ENCODE measurements at regions of chr17 and their contacts with region 1.

Region 1: DNA sequence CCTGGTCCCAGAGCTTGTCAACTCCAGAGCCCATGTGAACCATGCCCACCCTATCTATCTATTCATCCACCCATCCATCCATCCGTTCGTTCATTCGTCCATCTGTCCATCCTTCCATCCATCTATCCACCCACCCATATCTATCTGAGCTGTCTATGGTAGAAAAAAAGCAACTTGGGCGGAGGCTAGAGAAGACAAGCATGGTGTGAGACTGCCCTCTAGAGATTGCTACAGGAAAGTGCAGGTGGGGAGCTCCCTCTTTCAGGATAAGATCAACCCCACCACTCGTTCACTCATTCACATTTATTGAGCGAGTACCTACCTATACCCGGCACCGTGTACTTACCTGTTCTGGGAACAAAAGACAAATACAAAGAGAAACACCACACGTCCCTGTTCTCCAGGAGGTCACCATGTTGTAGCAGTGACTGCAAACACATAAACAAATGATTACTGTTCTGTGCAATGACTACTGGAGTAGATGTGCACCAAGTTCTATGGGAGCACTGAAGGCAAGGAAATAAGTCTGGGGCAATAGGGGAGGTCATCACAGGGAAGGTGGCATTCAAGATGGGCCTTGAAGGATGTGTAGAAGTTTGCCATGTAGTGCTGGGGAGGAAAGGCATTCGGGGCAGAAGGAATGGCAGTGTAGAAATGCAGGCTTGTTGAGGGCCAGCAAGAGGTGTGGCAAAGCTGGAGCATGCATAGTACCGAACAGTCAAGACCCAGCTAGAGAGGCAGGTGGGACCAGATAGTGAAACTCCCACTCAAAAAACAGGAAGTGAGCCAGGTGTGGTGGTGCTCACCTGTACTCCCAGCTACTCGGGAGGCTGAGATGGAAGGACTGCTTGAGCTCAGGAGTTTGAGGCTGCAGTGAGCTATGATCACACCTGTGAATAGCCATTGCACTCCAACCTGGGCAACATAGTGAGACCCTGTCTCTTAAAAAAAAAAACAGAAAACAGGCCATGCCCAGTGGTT is 13.4 kb upstream of the ATP5MC1 start:
- DNase-seq: peak; percentile 86 to 90
- H3K4me3 ChIP-seq: no peak overlapping the region
- H3K4me3 Mint-ChIP-seq: no peak overlapping the region
- H3K27ac Mint-ChIP-seq: no peak overlapping the region
- H3K4me1 ChIP-seq: peaks cover 11% of the 10 kb centered on the region
- H3K4me1 Mint-ChIP-seq: peaks cover 12% of the 10 kb centered on the region
- H3K27me3 ChIP-seq: no peaks in the 10 kb centered on the region
- H3K27me3 Mint-ChIP-seq: no peaks in the 10 kb centered on the region
- CTCF ChIP-seq: peak; percentile 100

Region 2: GRCh38 chr17:48678141-48678971 is 200.9 kb before region 1 on chr17:
- CTCF ChIA-PET with region 1: interaction called, 73 read pairs
- POLR2A ChIA-PET with region 1: no interaction called
- intact Hi-C with region 1: loop called (anchors 1 kb)
- DNase-seq: peak; percentile 69 to 87
- H3K4me3 ChIP-seq: no peak overlapping the region
- H3K4me3 Mint-ChIP-seq: no peak overlapping the region
- H3K27ac Mint-ChIP-seq: no peak overlapping the region
- H3K4me1 ChIP-seq: no peaks in the 10 kb centered on the region
- H3K4me1 Mint-ChIP-seq: no peaks in the 10 kb centered on the region
- H3K27me3 ChIP-seq: no peaks in the 10 kb centered on the region
- H3K27me3 Mint-ChIP-seq: peaks cover 8% of the 10 kb centered on the region
- CTCF ChIP-seq: peak; percentile 99

Region 3: GRCh38 chr17:48767263-48767774 is 111.9 kb before region 1 on chr17:
- CTCF ChIA-PET with region 1: interaction called, 18 read pairs
- POLR2A ChIA-PET with region 1: no interaction called
- intact Hi-C with region 1: no loop called
- DNase-seq: peak in 1 of 2 experiments; percentile 34
- H3K4me3 ChIP-seq: no peak overlapping the region
- H3K4me3 Mint-ChIP-seq: no peak overlapping the region
- H3K27ac Mint-ChIP-seq: no peak overlapping the region
- H3K4me1 ChIP-seq: no peaks in the 10 kb centered on the region
- H3K4me1 Mint-ChIP-seq: no peaks in the 10 kb centered on the region
- H3K27me3 ChIP-seq: no peaks in the 10 kb centered on the region
- H3K27me3 Mint-ChIP-seq: peaks cover 19% of the 10 kb centered on the region
- CTCF ChIP-seq: peak; percentile 50 to 63

Region 4: GRCh38 chr17:48816774-48817590 is 62.2 kb before region 1 on chr17 and contains the start of gene TTLL6:
- CTCF ChIA-PET with region 1: interaction called, 1,184 read pairs
- POLR2A ChIA-PET with region 1: interaction called, 8 read pairs
- intact Hi-C with region 1: loop called (anchors 1 kb)
- DNase-seq: peak; percentile 99 to 100
- H3K4me3 ChIP-seq: peak within 1 kb of the TSS; percentile 54
- H3K4me3 Mint-ChIP-seq: peak within 1 kb of the TSS; percentile 75
- H3K27ac Mint-ChIP-seq: no peak within 1 kb of the TSS
- H3K4me1 ChIP-seq: peaks cover 10% of the 10 kb centered on the region
- H3K4me1 Mint-ChIP-seq: peaks cover 8% of the 10 kb centered on the region
- H3K27me3 ChIP-seq: no peaks in the 10 kb centered on the region
- H3K27me3 Mint-ChIP-seq: peaks cover 2% of the 10 kb centered on the region
- CTCF ChIP-seq: peak in 1 of 2 experiments; percentile 17
- total RNA-seq, gene TTLL6: 0.16 and 0.81 TPM in 2 replicates

Region 5: DNA sequence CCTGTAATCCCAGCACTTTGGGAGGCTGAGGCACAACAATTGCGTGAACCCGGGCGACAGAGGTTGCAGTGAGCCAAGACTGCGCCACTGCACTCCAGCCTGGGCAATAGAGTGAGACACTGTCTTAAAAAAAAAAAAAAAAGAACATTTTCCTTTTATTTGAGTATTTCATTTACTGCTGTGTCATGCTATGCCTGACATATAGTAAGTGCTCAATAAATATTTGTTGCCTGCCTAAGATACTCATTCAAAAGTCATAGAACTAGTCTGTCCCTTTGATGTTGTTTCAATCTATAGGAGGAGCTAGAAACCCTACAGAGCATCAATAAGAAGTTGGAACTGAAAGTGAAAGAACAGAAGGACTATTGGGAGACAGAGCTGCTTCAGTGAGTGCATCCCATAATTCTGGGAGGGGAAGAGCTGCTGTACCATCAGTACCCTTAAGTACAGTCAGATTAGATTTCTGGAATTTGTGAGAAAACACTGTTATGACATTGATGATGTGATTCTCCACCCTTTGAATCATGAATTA is 28.4 kb before region 1 on chr17:
- CTCF ChIA-PET with region 1: interaction called, 16 read pairs
- POLR2A ChIA-PET with region 1: interaction called, 5 read pairs
- intact Hi-C with region 1: loop called (anchors 1 kb)
- DNase-seq: no peak
- H3K4me3 ChIP-seq: no peak overlapping the region
- H3K4me3 Mint-ChIP-seq: no peak overlapping the region
- H3K27ac Mint-ChIP-seq: no peak overlapping the region
- H3K4me1 ChIP-seq: peaks cover 18% of the 10 kb centered on the region
- H3K4me1 Mint-ChIP-seq: peaks cover 10% of the 10 kb centered on the region
- H3K27me3 ChIP-seq: no peaks in the 10 kb centered on the region
- H3K27me3 Mint-ChIP-seq: no peaks in the 10 kb centered on the region
- CTCF ChIP-seq: no peak

Region 6: GRCh38 chr17:48908047-48908843 is 29.0 kb after region 1 on chr17 and contains the start of gene UBE2Z:
- CTCF ChIA-PET with region 1: interaction called, 15 read pairs
- POLR2A ChIA-PET with region 1: interaction called, 5 read pairs
- intact Hi-C with region 1: no loop called
- DNase-seq: peak; percentile 99
- H3K4me3 ChIP-seq: peak within 1 kb of the TSS; percentile 94
- H3K4me3 Mint-ChIP-seq: peak within 1 kb of the TSS; percentile 89
- H3K27ac Mint-ChIP-seq: peak within 1 kb of the TSS; percentile 95
- H3K4me1 ChIP-seq: peaks cover 26% of the 10 kb centered on the region
- H3K4me1 Mint-ChIP-seq: peaks cover 37% of the 10 kb centered on the region
- H3K27me3 ChIP-seq: no peaks in the 10 kb centered on the region
- H3K27me3 Mint-ChIP-seq: no peaks in the 10 kb centered on the region
- CTCF ChIP-seq: peak in 1 of 2 experiments; percentile 68
- total RNA-seq, gene UBE2Z: 182 and 187 TPM in 2 replicates